ENCODE measurements at regions of chr7 and their contacts with region 1.

Region 1: DNA sequence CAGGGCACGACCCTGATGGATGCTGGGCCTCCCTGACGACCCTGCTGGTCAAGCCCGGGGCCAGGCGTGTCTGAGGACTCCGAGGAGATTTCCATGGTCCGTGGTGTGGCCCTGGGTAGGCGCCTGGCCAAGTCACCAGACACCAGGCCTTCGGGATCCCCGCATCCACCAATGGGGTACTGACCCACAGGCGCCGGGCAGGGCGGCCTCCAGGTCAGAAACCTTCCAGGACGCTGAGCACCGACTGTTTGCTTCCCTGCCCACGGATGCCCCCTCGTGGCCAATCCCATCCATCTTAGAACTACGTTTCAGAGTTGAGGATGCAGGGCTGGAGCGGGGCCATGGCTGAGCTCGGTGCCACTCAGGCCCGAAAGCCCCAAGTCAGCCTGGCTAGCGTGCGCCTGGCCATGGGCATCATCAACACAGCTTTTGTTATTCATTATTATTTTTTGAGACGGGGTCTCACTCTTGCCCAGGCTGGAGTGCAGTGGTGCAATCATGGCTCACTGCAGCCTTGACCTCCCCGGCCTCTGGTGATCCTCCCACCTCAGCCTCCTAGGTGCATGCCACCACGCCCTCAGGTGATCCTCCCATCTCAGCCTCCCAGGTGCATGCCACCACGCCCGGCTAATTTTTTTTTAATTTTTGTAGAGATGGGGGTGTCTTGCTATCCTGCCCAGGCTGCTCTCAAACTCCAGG is 7.1 kb upstream of the AMZ1 start:
- DNase-seq: peak; percentile 57 to 72
- ATAC-seq: peak; percentile 87 to 97
- H3K4me3 ChIP-seq: no peak overlapping the region
- H3K27ac ChIP-seq: no peak overlapping the region
- H3K4me1 ChIP-seq: no peaks in the 10 kb centered on the region
- H3K27me3 ChIP-seq: peaks cover 19 to 29% (median 21%) of the 10 kb centered on the region in 3 donors
- CTCF ChIP-seq: peak; percentile 64 to 85 (median 80)
- POLR2A ChIP-seq: no peak

Region 2: DNA sequence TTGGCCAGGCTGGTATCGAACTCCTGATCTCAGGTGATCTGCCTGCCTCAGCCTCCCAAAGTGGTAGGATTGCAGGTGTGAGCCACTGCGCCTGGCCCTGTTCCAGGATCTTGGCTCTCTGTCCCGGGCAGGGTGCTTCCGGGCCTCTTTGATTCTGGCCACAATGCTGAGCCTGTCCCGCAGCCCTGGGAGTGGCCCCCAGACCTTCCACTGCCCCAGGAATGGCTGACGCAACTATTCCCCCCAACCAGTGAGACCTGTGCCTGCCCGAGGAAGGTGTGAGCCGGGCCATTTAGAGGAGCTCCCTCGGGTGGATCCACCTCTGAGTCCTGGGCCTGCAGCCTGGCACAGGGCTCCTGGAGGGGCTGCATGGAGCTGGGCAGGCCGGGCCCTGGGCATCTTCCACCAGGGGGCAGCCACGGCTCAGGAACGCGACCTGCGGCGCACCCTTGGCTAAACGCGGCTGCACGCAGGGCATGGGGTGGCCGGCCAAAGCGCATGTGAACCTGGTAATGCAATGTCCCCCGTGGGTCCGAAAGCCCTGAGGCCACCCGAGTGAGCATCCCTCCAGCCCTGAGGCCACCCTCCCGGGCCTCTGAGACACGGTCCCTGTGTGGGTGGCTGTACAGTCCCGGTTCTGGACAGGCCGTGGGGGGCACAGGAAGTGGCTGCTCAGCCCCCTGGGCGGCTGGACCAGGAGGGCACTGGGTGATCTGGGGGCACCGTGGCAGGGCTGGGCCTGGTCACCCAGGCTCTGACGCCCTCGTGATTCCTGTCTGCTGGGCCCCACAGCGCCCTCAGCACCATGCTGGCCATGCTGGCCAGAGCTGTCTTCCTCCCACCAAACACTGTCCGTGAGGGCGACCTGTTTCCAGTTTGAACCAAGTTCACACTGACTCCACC is 229.5 kb before region 1 on chr7:
- in situ Hi-C with region 1: loop called in 3 of 4 experiments (anchors 10 to 25 kb)
- intact Hi-C with region 1: loop called (anchors 1 kb)
- DNase-seq: peak; percentile 32 to 61
- ATAC-seq: peak; percentile 78 to 91
- H3K4me3 ChIP-seq: peak overlapping the region; percentile 39 to 65 (median 55)
- H3K27ac ChIP-seq: no peak overlapping the region
- H3K4me1 ChIP-seq: peaks cover 0 to 9% of the 10 kb centered on the region in 2 donors
- H3K27me3 ChIP-seq: no peaks in the 10 kb centered on the region
- CTCF ChIP-seq: peak; percentile 66 to 92 (median 84)
- POLR2A ChIP-seq: no peak

Region 3: DNA sequence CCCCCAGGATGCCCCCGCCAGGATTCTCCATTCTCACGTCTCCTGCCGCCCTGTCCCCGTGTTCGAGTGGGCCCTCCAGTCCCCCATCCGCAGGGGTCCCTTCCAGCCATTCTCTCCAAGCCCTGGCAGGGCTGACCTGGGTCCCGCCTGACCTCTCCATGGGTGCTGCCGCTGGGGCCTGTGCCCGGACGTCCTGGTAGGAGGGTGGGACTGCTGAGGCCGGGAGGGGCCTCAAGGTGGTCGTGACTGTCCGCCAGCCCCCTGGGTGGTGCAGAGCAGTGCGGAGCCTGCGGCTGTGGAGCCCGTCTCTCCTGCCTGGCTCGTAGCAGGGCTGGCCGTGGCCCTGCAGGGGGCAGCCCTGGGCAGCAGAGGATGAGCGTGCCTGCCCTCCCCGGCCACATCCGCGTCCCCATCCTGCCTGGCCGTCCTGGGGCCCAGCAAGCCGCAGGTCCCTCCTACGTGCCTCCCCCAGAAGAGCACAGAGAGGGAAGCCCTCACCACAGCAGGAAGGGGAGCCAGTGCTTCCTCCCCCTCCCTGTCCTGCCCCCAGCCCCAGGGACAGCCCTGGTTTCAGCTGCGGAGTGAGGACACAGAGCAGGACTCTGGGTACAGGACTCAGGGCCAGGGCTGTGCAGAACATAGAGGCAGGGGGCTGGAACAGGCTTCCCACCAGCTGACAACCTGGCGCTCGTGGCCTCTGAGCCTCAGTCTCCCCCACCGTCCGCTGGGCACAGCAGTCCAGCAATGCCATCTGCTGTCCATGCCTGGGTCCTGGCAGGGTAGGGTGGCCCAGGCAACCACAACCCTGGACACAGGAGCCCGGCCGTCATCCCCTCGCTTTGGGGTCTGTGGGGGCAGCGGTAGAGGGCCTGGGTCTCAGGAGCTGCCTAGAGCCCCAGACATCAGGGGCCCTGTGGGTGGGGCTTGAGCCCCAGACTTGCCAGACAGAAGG is 203.2 kb before region 1 on chr7:
- in situ Hi-C with region 1: loop called in 2 of 4 experiments (anchors 25 kb)
- intact Hi-C with region 1: loop called (anchors 5 kb)
- DNase-seq: no peak
- ATAC-seq: peak; percentile 28 to 37
- H3K4me3 ChIP-seq: no peak overlapping the region
- H3K27ac ChIP-seq: no peak overlapping the region
- H3K4me1 ChIP-seq: peaks cover 13 to 14% of the 10 kb centered on the region in 2 donors
- H3K27me3 ChIP-seq: peaks cover 32 to 60% (median 35%) of the 10 kb centered on the region in 3 donors
- CTCF ChIP-seq: peak; percentile 25 to 76 (median 63)
- POLR2A ChIP-seq: no peak

Region 4: GRCh38 chr7:2567679-2568278 is 113.2 kb before region 1 on chr7:
- in situ Hi-C with region 1: loop called in 2 of 4 experiments (anchors 10 kb)
- intact Hi-C with region 1: loop called (anchors 1 kb)
- DNase-seq: no peak
- ATAC-seq: peak in 1 of 2 donors; percentile 39
- H3K4me3 ChIP-seq: no peak overlapping the region
- H3K27ac ChIP-seq: no peak overlapping the region
- H3K4me1 ChIP-seq: peaks cover 6 to 8% of the 10 kb centered on the region in 2 donors
- H3K27me3 ChIP-seq: no peaks in the 10 kb centered on the region
- CTCF ChIP-seq: peak in 4 of 5 experiments; percentile 20 to 51 (median 47)
- POLR2A ChIP-seq: no peak

Region 5: DNA sequence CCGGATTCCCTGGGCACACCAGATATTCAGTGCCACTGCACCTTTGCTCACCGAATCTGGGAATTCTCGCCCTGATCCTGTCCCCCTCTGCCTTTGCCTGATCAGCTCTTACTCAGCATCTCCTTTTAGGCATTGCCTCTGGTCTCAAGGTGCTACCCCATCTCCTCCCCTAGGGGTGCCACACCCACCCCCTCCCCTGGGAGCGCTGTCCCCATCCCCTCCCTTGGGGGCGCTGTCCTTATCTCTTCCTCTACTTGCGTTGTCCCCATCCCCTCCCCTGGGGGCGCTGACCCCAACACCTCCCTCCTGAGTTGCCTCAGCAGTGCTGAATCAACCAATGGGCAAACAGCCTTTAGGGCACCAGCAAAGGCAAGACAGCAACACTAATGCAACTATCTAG is 1314.2 kb after region 1 on chr7:
- in situ Hi-C with region 1: no loop called
- intact Hi-C with region 1: no loop called
- DNase-seq: no peak
- ATAC-seq: no peak
- H3K4me3 ChIP-seq: no peak overlapping the region
- H3K27ac ChIP-seq: no peak overlapping the region
- H3K4me1 ChIP-seq: peaks cover 0 to 7% of the 10 kb centered on the region in 2 donors
- H3K27me3 ChIP-seq: no peaks in the 10 kb centered on the region
- CTCF ChIP-seq: no peak
- POLR2A ChIP-seq: no peak

Measured in gastrocnemius medialis (tissue), 4 donors.